HEK293 (cell line): ENCODE measurements at regions of chr17 and their contacts with region 1.

Region 1: DNA sequence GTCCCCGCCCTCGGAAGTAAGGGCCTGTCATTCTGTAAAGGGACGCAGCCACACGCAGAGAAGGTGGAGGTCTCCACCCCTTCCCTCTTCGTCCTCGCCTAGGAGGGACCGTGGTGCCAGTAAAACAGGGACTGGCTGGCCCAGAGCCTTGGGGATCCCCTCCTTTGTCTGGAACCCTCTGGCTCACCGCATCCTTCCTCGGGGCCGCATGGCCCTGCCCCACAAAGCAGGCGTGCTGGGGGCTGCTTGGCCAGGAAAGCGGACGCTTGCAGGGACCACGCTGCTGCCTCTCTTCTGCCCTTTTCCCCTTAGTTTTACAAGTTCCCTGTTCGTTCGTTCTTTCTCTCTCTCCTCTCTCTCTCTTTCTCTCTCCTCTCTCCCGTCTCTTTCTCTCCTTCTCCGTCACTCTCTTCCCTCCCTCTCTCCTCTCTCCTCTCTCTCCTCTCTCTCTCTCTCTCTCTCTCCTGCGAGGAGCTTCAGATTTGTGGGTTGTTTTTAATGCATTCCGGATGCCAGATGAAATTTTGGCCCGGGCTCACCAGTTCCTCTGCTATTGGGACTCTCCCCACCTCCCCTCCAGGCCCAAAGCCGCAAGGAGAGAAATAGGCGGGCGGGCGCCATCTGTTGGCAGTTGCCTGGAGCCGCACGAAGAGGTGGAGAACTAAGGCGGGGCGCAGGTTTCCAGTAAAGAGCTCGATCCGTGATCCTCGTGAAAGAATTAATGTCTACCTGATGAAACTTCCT is 35.1 kb upstream of the CDRT4 start:
- H3K4me3 ChIP-seq: no peak overlapping the region
- H3K27ac ChIP-seq: no peak overlapping the region
- H3K4me1 ChIP-seq: no peaks in the 10 kb centered on the region
- CTCF ChIP-seq: peak; percentile 63

Region 2: GRCh38 chr17:15247891-15248529 is 254.5 kb before region 1 on chr17:
- CTCF ChIA-PET with region 1: interaction called, 30 read pairs
- POLR2A ChIA-PET with region 1: no interaction called
- H3K4me3 ChIP-seq: no peak overlapping the region
- H3K27ac ChIP-seq: no peak overlapping the region
- H3K4me1 ChIP-seq: no peaks in the 10 kb centered on the region
- CTCF ChIP-seq: no peak

Region 3: GRCh38 chr17:15257258-15257788 is 245.2 kb before region 1 on chr17:
- CTCF ChIA-PET with region 1: interaction called, 92 read pairs
- POLR2A ChIA-PET with region 1: no interaction called
- H3K4me3 ChIP-seq: no peak overlapping the region
- H3K27ac ChIP-seq: no peak overlapping the region
- H3K4me1 ChIP-seq: peaks cover 4% of the 10 kb centered on the region
- CTCF ChIP-seq: peak; percentile 96

Region 4: GRCh38 chr17:15351925-15352324 is 150.6 kb before region 1 on chr17:
- CTCF ChIA-PET with region 1: interaction called, 10 read pairs
- POLR2A ChIA-PET with region 1: no interaction called
- H3K4me3 ChIP-seq: no peak overlapping the region
- H3K27ac ChIP-seq: no peak overlapping the region
- H3K4me1 ChIP-seq: peaks cover 31% of the 10 kb centered on the region
- CTCF ChIP-seq: no peak

Region 5: DNA sequence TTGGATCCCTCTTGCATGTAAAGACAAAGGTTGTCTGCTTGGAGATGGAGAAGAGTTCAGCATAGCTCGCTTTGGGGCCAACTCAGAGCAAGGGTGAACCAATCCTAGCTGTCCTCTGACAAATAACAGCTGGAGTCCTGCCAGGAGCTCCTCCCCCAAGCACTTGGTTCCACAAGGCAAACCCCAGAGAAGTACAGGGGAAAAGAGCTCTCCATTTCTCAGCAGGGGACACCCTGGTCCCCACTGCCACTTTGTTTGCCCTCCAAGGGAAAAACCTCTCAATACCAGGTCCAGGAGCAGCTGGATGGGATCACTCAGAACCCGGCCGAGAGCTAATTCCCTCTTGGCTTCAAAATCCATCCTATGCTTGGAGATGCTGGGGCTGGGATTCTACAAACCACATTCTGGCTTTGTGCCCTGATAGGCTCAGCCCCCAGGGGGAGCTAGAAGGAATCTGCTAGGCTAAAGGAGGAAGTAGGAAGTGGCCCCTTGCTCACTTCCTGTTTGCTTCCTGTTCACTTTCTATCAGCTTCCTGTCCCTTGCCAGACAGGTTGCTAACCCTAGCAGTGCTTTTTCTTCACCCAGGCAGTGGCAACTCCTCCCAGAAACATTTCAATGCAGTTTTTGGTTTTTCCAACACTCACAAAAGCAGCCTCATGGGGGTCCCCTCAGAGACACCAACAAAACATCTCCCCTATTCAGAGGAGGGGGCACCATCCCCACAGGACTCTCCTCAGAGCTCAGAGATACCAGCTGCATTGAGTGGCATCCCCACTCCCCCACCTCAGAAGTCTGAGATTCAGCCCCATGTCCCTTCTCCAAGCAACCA is 65.9 kb before region 1 on chr17:
- CTCF ChIA-PET with region 1: interaction called, 43 read pairs
- POLR2A ChIA-PET with region 1: no interaction called
- H3K4me3 ChIP-seq: no peak overlapping the region
- H3K27ac ChIP-seq: no peak overlapping the region
- H3K4me1 ChIP-seq: peaks cover 6% of the 10 kb centered on the region; the same call in 1 of the 2 replicates
- CTCF ChIP-seq: no peak

Region 6: DNA sequence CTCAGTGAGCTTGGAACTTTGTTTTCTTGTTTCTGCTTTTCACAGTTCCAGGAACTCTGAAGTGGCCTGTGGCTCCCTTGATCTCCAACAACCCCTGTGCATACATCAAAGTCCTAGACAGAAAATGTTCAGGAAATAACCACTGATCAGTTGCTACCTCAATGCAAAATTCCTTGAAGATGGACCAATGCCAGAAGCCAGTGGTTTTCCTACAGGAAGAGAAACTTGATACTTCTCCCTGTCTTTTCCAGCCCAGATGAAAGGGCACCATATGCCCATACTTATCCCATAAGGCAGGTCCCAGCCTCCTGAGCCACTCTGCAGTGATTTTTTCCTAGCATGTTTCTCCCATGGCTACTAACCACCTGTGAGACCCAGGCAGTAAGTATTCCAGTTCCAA is 22.8 kb before region 1 on chr17:
- CTCF ChIA-PET with region 1: interaction called, 13 read pairs
- POLR2A ChIA-PET with region 1: no interaction called
- H3K4me3 ChIP-seq: no peak overlapping the region
- H3K27ac ChIP-seq: no peak overlapping the region
- H3K4me1 ChIP-seq: peaks cover 6% of the 10 kb centered on the region
- CTCF ChIP-seq: no peak

Region 7: GRCh38 chr17:15490634-15491261 is 11.8 kb before region 1 on chr17:
- CTCF ChIA-PET with region 1: interaction called, 31 read pairs
- POLR2A ChIA-PET with region 1: no interaction called
- H3K4me3 ChIP-seq: no peak overlapping the region
- H3K27ac ChIP-seq: no peak overlapping the region
- H3K4me1 ChIP-seq: no peaks in the 10 kb centered on the region
- CTCF ChIP-seq: no peak

Region 8: DNA sequence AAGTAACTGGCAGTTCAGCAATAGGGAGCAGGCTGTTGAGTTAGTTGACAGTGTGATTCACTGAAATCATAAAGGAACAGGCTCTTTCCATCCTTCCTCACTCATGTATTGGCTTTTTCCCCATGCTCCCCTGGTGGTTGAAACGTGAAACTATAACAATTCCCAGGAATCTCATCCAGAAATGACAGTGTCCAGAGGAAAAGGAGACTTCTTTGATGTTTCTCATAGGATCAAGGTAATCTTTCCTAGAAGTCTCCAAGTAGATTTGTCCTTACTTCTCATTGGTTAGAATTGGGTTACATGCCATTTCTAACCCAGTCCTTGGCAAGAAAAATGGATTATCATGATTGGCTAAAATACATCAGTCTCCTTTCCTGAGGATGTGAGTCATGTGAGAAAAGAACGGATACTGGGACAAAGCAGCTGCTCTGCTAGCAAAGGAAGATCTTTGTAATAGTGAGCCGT is 511.4 kb after region 1 on chr17:
- CTCF ChIA-PET with region 1: no interaction called
- POLR2A ChIA-PET with region 1: no interaction called
- H3K4me3 ChIP-seq: no peak overlapping the region
- H3K27ac ChIP-seq: no peak overlapping the region
- H3K4me1 ChIP-seq: peaks cover 2% of the 10 kb centered on the region; the same call in 1 of the 2 replicates
- CTCF ChIP-seq: no peak